ENCODE measurements at regions of chrX and their contacts with region 1.

Region 1: DNA sequence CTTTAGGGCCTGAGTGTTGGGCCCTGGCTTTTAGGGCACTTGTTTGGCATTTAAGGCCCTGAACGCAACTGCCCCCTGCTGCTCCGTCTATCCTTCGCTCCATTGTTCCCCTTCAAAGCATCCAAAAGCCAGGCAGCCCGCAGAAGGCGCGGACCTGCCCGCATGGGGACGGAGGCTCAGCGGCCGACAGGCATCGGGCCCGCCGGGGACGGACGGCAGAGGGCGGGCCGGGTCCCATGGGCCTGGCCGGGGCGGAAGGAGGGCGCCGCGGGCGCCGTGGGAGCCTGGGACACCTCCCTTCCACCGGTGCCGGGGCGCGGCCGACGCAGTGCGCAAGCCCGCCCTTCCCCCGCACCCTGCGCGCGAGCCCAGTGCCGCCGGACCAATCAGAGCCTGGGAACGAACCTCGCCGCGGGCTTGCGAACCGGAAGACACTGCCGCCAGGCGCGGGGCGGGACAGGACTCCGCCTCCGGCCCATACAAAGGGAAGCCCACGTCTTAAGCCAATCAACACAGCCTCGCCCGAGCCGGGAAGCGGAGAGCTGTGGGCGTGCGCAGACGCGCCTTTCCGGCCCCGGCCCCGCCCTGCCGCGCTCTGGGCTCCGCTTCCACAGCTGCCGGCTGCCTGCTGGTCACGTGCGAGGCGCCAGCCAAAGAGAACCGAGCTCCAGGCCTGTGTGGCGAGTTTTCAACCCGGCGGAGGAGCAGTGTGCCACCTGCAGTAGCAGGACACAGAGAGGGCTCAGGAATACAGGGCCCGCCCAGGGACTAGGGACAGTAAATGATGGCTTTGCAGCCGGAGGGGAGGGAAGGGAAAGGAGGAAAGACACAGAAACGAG is 2.1 kb upstream of the ARHGAP4 start:
- DNase-seq: peak; percentile 90
- H3K4me3 Mint-ChIP-seq: peak overlapping the region; percentile 86
- H3K27ac Mint-ChIP-seq: peak overlapping the region; percentile 99
- H3K4me1 Mint-ChIP-seq: peaks cover 20% of the 10 kb centered on the region
- H3K27me3 Mint-ChIP-seq: no peaks in the 10 kb centered on the region

Region 2: GRCh38 chrX:153794018-153794896 is 133.9 kb before region 1 on chrX and contains the starts of genes IDH3G and SSR4:
- intact Hi-C with region 1: loop called (anchors 1 kb)
- DNase-seq: peak; percentile 91
- H3K4me3 Mint-ChIP-seq: peak within 1 kb of the TSS; percentile 97
- H3K27ac Mint-ChIP-seq: peak within 1 kb of the TSS; percentile 93
- H3K4me1 Mint-ChIP-seq: peaks cover 9% of the 10 kb centered on the region
- H3K27me3 Mint-ChIP-seq: no peaks in the 10 kb centered on the region
- total RNA-seq, gene IDH3G: 70.8 and 72.4 TPM in 2 replicates
- total RNA-seq, gene SSR4: 282 and 303 TPM in 2 replicates

Region 3: GRCh38 chrX:153854702-153855101 is 73.4 kb before region 1 on chrX:
- intact Hi-C with region 1: no loop called
- DNase-seq: no peak
- H3K4me3 Mint-ChIP-seq: no peak overlapping the region
- H3K27ac Mint-ChIP-seq: no peak overlapping the region
- H3K4me1 Mint-ChIP-seq: no peaks in the 10 kb centered on the region
- H3K27me3 Mint-ChIP-seq: peaks cover 16% of the 10 kb centered on the region

Region 4: GRCh38 chrX:153959649-153960048 is 31.5 kb after region 1 on chrX:
- intact Hi-C with region 1: no loop called
- DNase-seq: no peak
- H3K4me3 Mint-ChIP-seq: no peak overlapping the region
- H3K27ac Mint-ChIP-seq: no peak overlapping the region
- H3K4me1 Mint-ChIP-seq: no peaks in the 10 kb centered on the region
- H3K27me3 Mint-ChIP-seq: no peaks in the 10 kb centered on the region

Region 5: GRCh38 chrX:153971450-153972367 is 43.6 kb after region 1 on chrX and contains the start of gene HCFC1:
- intact Hi-C with region 1: loop called (anchors 1 kb)
- DNase-seq: peak; percentile 87
- H3K4me3 Mint-ChIP-seq: peak within 1 kb of the TSS; percentile 100
- H3K27ac Mint-ChIP-seq: peak within 1 kb of the TSS; percentile 100
- H3K4me1 Mint-ChIP-seq: peaks cover 33% of the 10 kb centered on the region
- H3K27me3 Mint-ChIP-seq: no peaks in the 10 kb centered on the region
- total RNA-seq, gene HCFC1: 107 and 108 TPM in 2 replicates

Region 6: GRCh38 chrX:154116426-154117211 is 188.5 kb after region 1 on chrX:
- intact Hi-C with region 1: no loop called
- DNase-seq: no peak
- H3K4me3 Mint-ChIP-seq: no peak overlapping the region
- H3K27ac Mint-ChIP-seq: no peak overlapping the region
- H3K4me1 Mint-ChIP-seq: peaks cover 4% of the 10 kb centered on the region
- H3K27me3 Mint-ChIP-seq: peaks cover 15% of the 10 kb centered on the region

Region 7: GRCh38 chrX:154378782-154379591 is 450.8 kb after region 1 on chrX and contains the start of gene EMD:
- intact Hi-C with region 1: loop called (anchors 10 kb)
- DNase-seq: peak; percentile 96
- H3K4me3 Mint-ChIP-seq: peak within 1 kb of the TSS; percentile 87
- H3K27ac Mint-ChIP-seq: peak within 1 kb of the TSS; percentile 88
- H3K4me1 Mint-ChIP-seq: peaks cover 9% of the 10 kb centered on the region
- H3K27me3 Mint-ChIP-seq: no peaks in the 10 kb centered on the region
- total RNA-seq, gene EMD: 95.6 and 98.8 TPM in 2 replicates